ENCODE measurements at regions of chr2 and their contacts with region 1.

Region 1: GRCh38 chr2:215311625-215312396 is at the start of gene ATIC:
- DNase-seq: peak; percentile 91
- ATAC-seq: peak; percentile 93
- H3K4me3 ChIP-seq: peak within 1 kb of the TSS; percentile 63 to 100 (median 95)
- H3K4me3 Mint-ChIP-seq: peak within 1 kb of the TSS; percentile 96
- H3K27ac ChIP-seq: peak within 1 kb of the TSS; percentile 25 to 77
- H3K27ac Mint-ChIP-seq: peak within 1 kb of the TSS; percentile 91
- H3K4me1 ChIP-seq: peaks cover 17% of the 10 kb centered on the region in 2 donors
- H3K4me1 Mint-ChIP-seq: peaks cover 34% of the 10 kb centered on the region
- H3K27me3 ChIP-seq: no peaks in the 10 kb centered on the region
- H3K27me3 Mint-ChIP-seq: no peaks in the 10 kb centered on the region
- CTCF ChIP-seq: no peak
- total RNA-seq, gene ATIC: 80.4 and 80.6 TPM in 2 replicates

Region 2: DNA sequence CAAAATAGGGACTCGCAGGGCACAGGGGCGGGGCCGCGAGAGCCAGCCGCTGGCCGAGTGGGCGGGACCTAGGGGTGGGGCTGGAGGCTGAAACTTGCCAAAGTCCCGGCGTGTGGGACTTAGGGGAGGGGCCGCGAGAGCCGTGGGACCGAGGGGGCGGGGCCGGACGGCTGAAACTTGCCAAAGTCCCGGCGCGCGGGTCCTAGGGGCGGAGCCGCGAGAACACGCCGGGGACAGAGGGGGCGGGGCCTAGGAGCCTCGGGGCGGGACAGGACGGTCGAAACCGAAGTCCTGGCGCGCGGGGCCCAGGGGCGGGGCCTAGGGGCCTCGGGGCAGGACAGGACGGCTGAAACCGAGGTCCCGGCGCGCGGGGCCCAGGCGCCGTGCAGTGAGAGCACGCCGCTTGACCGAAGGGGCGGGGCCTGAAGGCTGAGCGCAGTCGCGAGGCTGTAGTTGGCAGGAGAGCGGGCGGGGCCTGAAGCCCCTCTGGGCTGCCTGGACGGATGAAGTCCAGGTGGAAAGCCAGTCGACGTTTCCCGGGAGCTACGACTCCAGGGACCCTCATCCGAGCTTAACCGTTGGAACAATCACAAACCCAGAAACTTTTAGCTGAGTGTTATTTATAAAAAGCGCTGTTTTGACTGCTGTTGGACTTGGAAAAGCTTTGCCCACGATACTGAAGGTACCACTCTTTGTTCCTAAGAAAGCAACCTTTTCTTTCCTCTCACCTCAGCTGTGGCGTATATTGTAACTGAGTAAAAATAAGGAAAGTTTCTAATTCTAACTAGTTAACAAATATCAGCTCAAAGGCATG is 501.9 kb before region 1 on chr2:
- CTCF ChIA-PET with region 1: no interaction called
- POLR2A ChIA-PET with region 1: no interaction called
- intact Hi-C with region 1: loop called (anchors 1 kb)
- DNase-seq: peak; percentile 99
- ATAC-seq: peak; percentile 88
- H3K4me3 ChIP-seq: peak overlapping the region; percentile 53 to 96 (median 94)
- H3K4me3 Mint-ChIP-seq: peak overlapping the region; percentile 98
- H3K27ac ChIP-seq: peak overlapping the region; percentile 75 to 76
- H3K27ac Mint-ChIP-seq: peak overlapping the region; percentile 98
- H3K4me1 ChIP-seq: peaks cover 13 to 19% of the 10 kb centered on the region in 2 donors
- H3K4me1 Mint-ChIP-seq: peaks cover 40% of the 10 kb centered on the region
- H3K27me3 ChIP-seq: no peaks in the 10 kb centered on the region
- H3K27me3 Mint-ChIP-seq: no peaks in the 10 kb centered on the region
- CTCF ChIP-seq: no peak

Region 3: DNA sequence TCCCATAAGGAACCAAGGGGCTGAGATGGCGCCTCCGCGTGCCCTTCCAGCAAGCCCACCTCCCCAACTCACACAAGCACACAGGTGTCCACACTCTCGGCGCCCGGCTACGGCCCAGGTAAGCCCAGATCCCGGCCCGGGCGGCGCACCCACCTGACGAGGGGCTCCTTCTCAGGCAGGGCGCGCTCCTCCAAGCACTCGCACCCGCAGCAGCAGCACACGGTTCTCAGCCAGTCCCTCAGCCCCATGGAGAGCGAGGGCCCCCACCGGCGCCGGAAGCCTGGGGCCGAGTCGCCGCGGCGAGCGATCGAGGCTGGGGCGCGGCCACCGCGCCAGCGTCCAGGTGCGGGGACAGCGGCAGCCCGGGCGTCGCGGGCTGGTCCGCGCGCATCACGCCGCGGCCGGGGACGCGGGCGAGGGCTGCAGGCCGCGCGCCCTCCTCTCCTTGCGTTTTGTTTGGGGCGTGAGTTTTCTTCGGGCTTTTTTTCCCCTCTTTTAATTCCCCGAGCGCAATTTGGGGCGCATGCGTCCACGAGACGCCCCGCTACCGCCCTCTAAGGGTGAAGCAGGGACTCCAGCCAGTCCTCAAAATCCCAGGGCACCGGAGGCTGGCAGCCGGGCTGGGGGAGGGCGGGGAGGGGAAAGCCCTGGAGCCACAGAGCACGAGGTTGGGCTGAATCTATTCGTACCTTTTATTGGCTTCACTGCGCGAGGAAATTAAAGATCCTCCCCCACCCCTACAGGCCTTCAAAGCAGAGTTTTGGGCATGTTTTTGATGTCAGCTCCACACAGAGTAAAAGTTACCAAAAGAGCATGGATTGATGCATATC is 701.5 kb after region 1 on chr2 and contains the start of gene MREG:
- CTCF ChIA-PET with region 1: no interaction called
- POLR2A ChIA-PET with region 1: no interaction called
- intact Hi-C with region 1: loop called (anchors 2 kb)
- DNase-seq: peak; percentile 90
- ATAC-seq: peak; percentile 82
- H3K4me3 ChIP-seq: peak within 1 kb of the TSS; percentile 47 to 80 (median 69)
- H3K4me3 Mint-ChIP-seq: peak within 1 kb of the TSS; percentile 93
- H3K27ac ChIP-seq: peak within 1 kb of the TSS; percentile 20 to 61
- H3K27ac Mint-ChIP-seq: peak within 1 kb of the TSS; percentile 84
- H3K4me1 ChIP-seq: peaks cover 30 to 41% of the 10 kb centered on the region in 2 donors
- H3K4me1 Mint-ChIP-seq: peaks cover 49% of the 10 kb centered on the region
- H3K27me3 ChIP-seq: no peaks in the 10 kb centered on the region
- H3K27me3 Mint-ChIP-seq: no peaks in the 10 kb centered on the region
- CTCF ChIP-seq: peak; percentile 74
- total RNA-seq, gene MREG: 5.7 and 6.3 TPM in 2 replicates

Region 4: GRCh38 chr2:216057688-216058193 is 745.9 kb after region 1 on chr2:
- CTCF ChIA-PET with region 1: no interaction called
- POLR2A ChIA-PET with region 1: no interaction called
- intact Hi-C with region 1: loop called (anchors 5 kb)
- DNase-seq: peak; percentile 79
- ATAC-seq: peak; percentile 92
- H3K4me3 ChIP-seq: peak overlapping the region; percentile 13 to 58 (median 50)
- H3K4me3 Mint-ChIP-seq: peak overlapping the region; percentile 84
- H3K27ac ChIP-seq: peak overlapping the region; percentile 93 to 95
- H3K27ac Mint-ChIP-seq: peak overlapping the region; percentile 98
- H3K4me1 ChIP-seq: peaks cover 17 to 19% of the 10 kb centered on the region in 2 donors
- H3K4me1 Mint-ChIP-seq: peaks cover 34% of the 10 kb centered on the region
- H3K27me3 ChIP-seq: no peaks in the 10 kb centered on the region
- H3K27me3 Mint-ChIP-seq: no peaks in the 10 kb centered on the region
- CTCF ChIP-seq: no peak

Region 5: GRCh38 chr2:216114714-216115557 is 803.1 kb after region 1 on chr2:
- CTCF ChIA-PET with region 1: no interaction called
- POLR2A ChIA-PET with region 1: interaction called, 9 read pairs
- intact Hi-C with region 1: loop called (anchors 5 kb)
- DNase-seq: peak; percentile 99
- ATAC-seq: peak; percentile 90
- H3K4me3 ChIP-seq: peak overlapping the region; percentile 52 to 90 (median 69)
- H3K4me3 Mint-ChIP-seq: peak overlapping the region; percentile 93
- H3K27ac ChIP-seq: peak overlapping the region; percentile 80 to 96
- H3K27ac Mint-ChIP-seq: peak overlapping the region; percentile 98
- H3K4me1 ChIP-seq: peaks cover 32 to 37% of the 10 kb centered on the region in 2 donors
- H3K4me1 Mint-ChIP-seq: peaks cover 71% of the 10 kb centered on the region
- H3K27me3 ChIP-seq: no peaks in the 10 kb centered on the region
- H3K27me3 Mint-ChIP-seq: no peaks in the 10 kb centered on the region
- CTCF ChIP-seq: peak; percentile 88

Region 6: DNA sequence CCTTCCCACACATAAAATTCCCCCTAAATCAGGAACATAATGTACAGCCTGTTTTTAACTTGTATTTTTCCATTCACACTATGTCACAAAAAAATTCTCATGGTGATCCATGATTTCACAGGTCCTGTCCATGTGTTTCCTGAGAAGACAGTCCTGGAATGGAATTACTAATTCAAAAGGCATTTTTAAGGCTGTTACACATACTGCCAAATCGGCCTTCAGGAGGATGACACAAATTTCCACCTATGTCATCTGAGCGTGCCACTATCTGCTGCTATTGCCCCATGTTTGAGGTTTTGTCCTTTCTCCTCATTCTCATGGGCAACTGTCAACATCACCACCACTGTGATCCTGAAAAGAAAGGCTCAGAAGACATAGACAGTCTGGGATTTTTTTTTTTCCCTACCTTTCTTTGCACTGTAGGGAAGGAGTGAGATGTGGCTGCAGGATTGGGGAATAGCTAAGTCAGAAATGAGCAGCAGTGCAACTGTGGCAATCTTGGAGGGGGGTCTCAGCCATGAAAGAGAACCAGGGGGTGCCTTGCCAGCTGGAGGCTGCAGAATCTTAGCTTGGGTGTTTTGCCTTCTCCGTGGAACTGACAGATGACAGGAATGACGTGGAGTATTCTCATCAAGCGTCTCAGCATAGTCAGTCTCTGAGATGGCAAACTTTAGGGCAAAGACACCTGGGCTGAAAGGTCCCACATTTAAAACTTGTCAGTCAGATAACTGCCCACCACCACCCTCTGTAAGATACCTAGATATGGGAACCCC is 987.1 kb after region 1 on chr2:
- CTCF ChIA-PET with region 1: no interaction called
- POLR2A ChIA-PET with region 1: no interaction called
- intact Hi-C with region 1: no loop called
- DNase-seq: no peak
- ATAC-seq: no peak
- H3K4me3 ChIP-seq: no peak overlapping the region
- H3K4me3 Mint-ChIP-seq: no peak overlapping the region
- H3K27ac ChIP-seq: no peak overlapping the region
- H3K27ac Mint-ChIP-seq: no peak overlapping the region
- H3K4me1 ChIP-seq: no peaks in the 10 kb centered on the region
- H3K4me1 Mint-ChIP-seq: peaks cover 5% of the 10 kb centered on the region
- H3K27me3 ChIP-seq: no peaks in the 10 kb centered on the region
- H3K27me3 Mint-ChIP-seq: peaks cover 11% of the 10 kb centered on the region
- CTCF ChIP-seq: no peak

Region 7: GRCh38 chr2:216412022-216412999 is 1100.5 kb after region 1 on chr2 and contains the start of gene SMARCAL1:
- CTCF ChIA-PET with region 1: no interaction called
- POLR2A ChIA-PET with region 1: no interaction called
- intact Hi-C with region 1: loop called (anchors 5 kb)
- DNase-seq: peak; percentile 99
- ATAC-seq: peak; percentile 94
- H3K4me3 ChIP-seq: peak within 1 kb of the TSS; percentile 17 to 94 (median 78)
- H3K4me3 Mint-ChIP-seq: peak within 1 kb of the TSS; percentile 99
- H3K27ac ChIP-seq: peak within 1 kb of the TSS; percentile 78 to 91
- H3K27ac Mint-ChIP-seq: peak within 1 kb of the TSS; percentile 99
- H3K4me1 ChIP-seq: peaks cover 11 to 18% of the 10 kb centered on the region in 2 donors
- H3K4me1 Mint-ChIP-seq: peaks cover 32% of the 10 kb centered on the region
- H3K27me3 ChIP-seq: peaks cover 0 to 4% (median 0%) of the 10 kb centered on the region in 4 experiments
- H3K27me3 Mint-ChIP-seq: peaks cover 11% of the 10 kb centered on the region
- CTCF ChIP-seq: no peak
- total RNA-seq, gene SMARCAL1: 46.7 and 50.7 TPM in 2 replicates

Region 8: DNA sequence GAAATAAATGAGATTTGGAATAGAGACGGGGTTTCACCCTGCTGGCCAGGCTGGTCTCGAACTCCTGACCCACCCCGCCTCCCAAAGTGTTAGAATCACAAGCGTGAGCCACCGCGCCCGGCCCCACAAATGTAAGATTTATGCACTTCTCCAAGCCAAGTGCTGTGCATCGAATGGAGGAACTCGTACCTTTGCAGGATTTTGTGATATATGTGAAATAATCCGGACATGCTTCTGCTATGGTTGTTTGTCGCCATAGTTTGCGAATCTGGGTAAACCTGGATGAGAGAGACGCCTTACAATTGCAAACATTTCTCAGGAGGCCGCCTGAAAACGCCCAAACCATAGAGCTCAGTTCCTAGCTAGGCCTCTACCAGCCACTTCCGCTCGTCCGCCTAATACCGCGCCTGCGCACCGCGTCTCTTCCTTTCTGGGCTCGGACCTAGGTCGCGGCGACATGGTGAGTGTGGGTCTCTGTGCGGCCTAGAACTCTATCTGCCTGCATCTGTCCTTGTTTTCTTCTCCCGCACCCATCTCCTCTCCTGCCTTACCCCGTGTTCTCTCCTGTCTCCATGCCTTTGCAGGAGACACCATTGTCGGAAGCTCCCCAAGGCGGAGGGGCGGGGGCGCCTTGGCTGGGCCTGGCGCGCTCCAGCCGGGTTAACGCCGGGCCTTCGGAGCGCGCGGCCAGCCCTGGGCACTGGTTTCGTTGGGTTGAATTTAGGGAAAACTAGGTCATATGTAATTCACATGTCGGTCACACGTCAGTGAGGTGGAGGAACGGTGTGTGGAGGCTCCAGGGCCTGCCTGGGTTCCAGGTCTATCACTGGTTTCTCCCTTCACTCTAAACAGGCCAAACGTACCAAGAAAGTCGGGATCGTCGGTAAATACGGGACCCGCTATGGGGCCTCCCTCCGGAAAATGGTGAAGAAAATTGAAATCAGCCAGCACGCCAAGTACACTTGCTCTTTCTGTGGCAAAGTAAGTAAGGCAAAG is 1186.9 kb after region 1 on chr2 and contains the start of gene RPL37A:
- CTCF ChIA-PET with region 1: no interaction called
- POLR2A ChIA-PET with region 1: no interaction called
- intact Hi-C with region 1: loop called (anchors 2 kb)
- DNase-seq: peak; percentile 94
- ATAC-seq: peak; percentile 97
- H3K4me3 ChIP-seq: peak within 1 kb of the TSS; percentile 65 to 96 (median 92)
- H3K4me3 Mint-ChIP-seq: peak within 1 kb of the TSS; percentile 98
- H3K27ac ChIP-seq: peak within 1 kb of the TSS; percentile 79 to 92
- H3K27ac Mint-ChIP-seq: peak within 1 kb of the TSS; percentile 97
- H3K4me1 ChIP-seq: peaks cover 24 to 25% of the 10 kb centered on the region in 2 donors
- H3K4me1 Mint-ChIP-seq: peaks cover 67% of the 10 kb centered on the region
- H3K27me3 ChIP-seq: no peaks in the 10 kb centered on the region
- H3K27me3 Mint-ChIP-seq: no peaks in the 10 kb centered on the region
- CTCF ChIP-seq: no peak
- total RNA-seq, gene RPL37A: 3,163 and 3,456 TPM in 2 replicates

Measured in B cell (primary cell).